ENCODE measurements at regions of chr7 and their contacts with region 1.

Region 1: DNA sequence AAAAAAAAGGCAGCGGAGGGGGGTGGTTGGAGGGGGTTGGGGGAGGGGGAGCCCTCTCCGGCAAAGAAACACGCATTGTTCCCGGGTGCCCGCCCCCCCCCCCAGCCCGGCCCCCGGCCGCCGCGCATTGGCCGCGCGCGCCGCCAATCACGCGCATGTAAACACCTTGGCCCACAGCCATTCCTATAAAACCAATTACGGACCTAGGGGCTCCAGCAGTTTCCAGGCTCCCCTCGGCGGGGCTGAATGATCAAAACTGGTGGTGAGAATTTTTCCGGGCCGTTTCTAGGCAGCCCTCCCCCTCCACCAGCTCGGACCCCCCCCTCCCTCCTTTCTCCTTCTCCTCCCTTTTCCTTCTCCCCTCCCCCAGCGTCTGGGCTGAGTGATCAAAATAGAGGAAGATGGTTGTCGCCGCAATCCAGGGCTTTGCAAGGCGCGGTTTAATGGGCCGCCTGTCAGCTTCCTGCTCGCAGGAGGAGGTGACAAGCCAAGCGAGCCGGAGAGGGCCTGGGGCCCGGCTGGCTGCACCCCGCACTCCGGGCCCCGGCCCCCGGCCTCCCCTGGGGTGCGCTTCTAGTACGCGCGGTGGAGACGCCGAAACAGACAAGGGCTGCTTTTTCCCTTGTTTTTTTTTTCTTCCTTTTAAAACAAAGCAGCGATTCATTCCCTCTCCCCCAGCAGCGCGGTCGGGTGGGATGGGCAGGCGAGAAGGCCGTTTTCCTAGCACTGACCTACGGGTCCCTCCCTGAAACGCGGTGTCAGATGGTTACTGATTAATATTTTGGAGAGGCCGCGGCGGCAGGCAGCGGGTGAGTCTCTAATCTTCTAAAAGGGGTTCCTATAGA is 432 bp upstream of the TNRC18 start:
- DNase-seq: peak; percentile 99
- H3K4me3 ChIP-seq: peak overlapping the region; percentile 79
- H3K27ac ChIP-seq: peak overlapping the region; percentile 99
- H3K4me1 ChIP-seq: peaks cover 17% of the 10 kb centered on the region
- H3K27me3 ChIP-seq: no peaks in the 10 kb centered on the region
- CTCF ChIP-seq: no peak

Region 2: DNA sequence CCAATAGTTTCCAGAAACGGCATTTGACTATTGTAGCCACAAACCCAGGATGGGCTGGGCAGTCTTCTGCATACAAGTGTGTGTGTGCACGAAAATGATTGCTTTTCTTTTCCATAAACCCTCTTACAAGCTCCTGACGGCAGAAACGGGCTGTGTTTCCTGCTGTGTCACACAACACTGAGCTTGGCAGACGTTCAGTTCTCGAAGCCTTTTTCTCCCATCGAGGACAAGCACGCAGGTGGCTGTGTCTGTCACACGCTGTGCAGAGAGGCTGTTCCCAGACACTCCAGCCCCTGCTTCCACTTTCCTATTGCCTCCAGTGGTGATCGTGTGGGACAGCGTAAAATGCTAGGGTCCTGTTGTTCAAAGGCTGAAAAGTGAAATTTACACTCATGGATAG is 346.3 kb before region 1 on chr7:
- CTCF ChIA-PET with region 1: no interaction called
- POLR2A ChIA-PET with region 1: no interaction called
- intact Hi-C with region 1: no loop called
- DNase-seq: peak; percentile 47
- H3K4me3 ChIP-seq: peak overlapping the region; percentile 19
- H3K27ac ChIP-seq: no peak overlapping the region
- H3K4me1 ChIP-seq: no peaks in the 10 kb centered on the region
- H3K27me3 ChIP-seq: no peaks in the 10 kb centered on the region
- CTCF ChIP-seq: no peak

Region 3: GRCh38 chr7:5396999-5397663 is 26.9 kb before region 1 on chr7:
- CTCF ChIA-PET with region 1: interaction called, 5 read pairs
- POLR2A ChIA-PET with region 1: no interaction called
- intact Hi-C with region 1: loop called (anchors 2 kb)
- DNase-seq: peak; percentile 96
- H3K4me3 ChIP-seq: peak overlapping the region; percentile 55
- H3K27ac ChIP-seq: peak overlapping the region; percentile 96
- H3K4me1 ChIP-seq: peaks cover 6% of the 10 kb centered on the region
- H3K27me3 ChIP-seq: no peaks in the 10 kb centered on the region
- CTCF ChIP-seq: no peak

Region 4: DNA sequence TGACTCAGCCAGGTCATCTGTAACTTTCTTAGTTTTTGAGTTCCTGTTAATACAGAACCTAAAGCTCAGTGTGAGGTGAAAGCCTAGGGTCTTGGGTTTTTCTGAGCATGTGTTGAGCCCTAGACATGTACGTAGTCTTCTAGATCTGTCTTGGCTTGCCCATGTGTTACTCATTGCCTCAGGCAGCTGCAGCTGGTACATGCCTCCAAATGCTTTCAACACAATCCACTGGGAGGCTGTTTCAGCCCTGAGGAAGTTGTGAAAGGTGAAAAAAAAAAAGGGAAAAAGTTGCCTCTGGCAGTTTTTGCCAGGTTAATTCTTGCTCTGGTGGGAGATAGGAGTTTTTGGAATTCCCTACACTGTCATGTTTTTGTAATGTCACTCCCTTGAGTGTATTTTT is 222.8 kb after region 1 on chr7:
- CTCF ChIA-PET with region 1: no interaction called
- POLR2A ChIA-PET with region 1: no interaction called
- intact Hi-C with region 1: no loop called
- DNase-seq: peak; percentile 21
- H3K4me3 ChIP-seq: no peak overlapping the region
- H3K27ac ChIP-seq: peak overlapping the region; percentile 39
- H3K4me1 ChIP-seq: no peaks in the 10 kb centered on the region
- H3K27me3 ChIP-seq: no peaks in the 10 kb centered on the region
- CTCF ChIP-seq: no peak

Region 5: DNA sequence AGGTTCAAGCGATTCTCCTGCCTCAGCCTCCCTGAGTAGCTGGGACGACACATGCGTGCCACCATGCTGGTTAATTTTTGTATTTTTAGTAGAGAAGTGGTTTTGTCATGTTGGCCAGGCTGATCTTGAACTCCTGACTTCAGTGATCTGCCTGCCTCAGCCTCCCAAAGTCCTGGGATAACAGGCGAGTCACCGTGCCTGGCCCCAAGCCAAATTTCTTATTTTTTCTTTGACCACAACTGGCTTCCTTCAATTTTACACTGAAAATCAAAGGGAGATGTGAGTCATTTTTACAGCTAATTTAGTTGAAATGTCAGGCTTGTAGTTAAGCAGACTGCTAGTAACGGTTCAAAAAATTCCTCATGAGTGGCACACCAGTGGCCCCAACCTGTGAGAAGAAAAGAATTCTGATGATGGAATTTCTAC is 349.6 kb after region 1 on chr7:
- CTCF ChIA-PET with region 1: no interaction called
- POLR2A ChIA-PET with region 1: interaction called, 17 read pairs
- intact Hi-C with region 1: no loop called
- DNase-seq: peak; percentile 70
- H3K4me3 ChIP-seq: no peak overlapping the region
- H3K27ac ChIP-seq: peak overlapping the region; percentile 52
- H3K4me1 ChIP-seq: peaks cover 15% of the 10 kb centered on the region
- H3K27me3 ChIP-seq: no peaks in the 10 kb centered on the region
- CTCF ChIP-seq: no peak

Measured in A673 (cell line).